A549 (cell line): ENCODE measurements at regions of chr15 and their contacts with region 1.

Region 1: DNA sequence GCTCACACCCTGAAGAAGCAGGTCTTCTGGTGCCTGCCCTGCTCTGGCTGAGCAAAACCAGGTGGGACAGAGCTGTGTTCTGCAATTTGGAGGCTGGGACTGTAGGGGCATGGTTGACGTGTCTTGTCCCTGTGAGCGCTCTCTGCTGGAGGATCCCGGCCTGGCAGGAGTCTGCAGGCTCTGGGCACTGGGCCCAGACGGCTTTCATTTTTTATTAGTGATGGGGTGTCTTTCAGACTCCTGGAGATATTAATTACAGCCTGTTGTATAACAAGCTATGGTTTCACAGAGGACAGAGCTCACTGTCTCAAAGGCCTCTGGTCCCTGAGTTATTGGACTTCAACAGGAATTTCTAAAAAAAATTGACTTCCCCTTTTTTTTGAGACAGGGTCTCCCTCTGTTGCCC is 29.5 kb upstream of the ZNF710 start:
- DNase-seq: peak; percentile 82 to 87
- ATAC-seq: peak; percentile 100
- H3K4me3 ChIP-seq: no peak overlapping the region
- H3K27ac ChIP-seq: no peak overlapping the region
- H3K4me1 ChIP-seq: no peaks in the 10 kb centered on the region
- CTCF ChIP-seq: peak; percentile 69
- EP300 ChIP-seq: no peak
- POLR2A ChIP-seq: no peak
- RAD21 ChIP-seq: peak; percentile 48 to 65

Region 2: GRCh38 chr15:89985111-89985510 is 13.5 kb after region 1 on chr15:
- CTCF ChIA-PET with region 1: interaction called, 14 read pairs
- POLR2A ChIA-PET with region 1: interaction called, 3 read pairs
- DNase-seq: no peak
- ATAC-seq: no peak
- H3K4me3 ChIP-seq: no peak overlapping the region
- H3K27ac ChIP-seq: no peak overlapping the region
- H3K4me1 ChIP-seq: no peaks in the 10 kb centered on the region
- CTCF ChIP-seq: no peak
- EP300 ChIP-seq: no peak
- POLR2A ChIP-seq: no peak
- RAD21 ChIP-seq: no peak

Region 3: DNA sequence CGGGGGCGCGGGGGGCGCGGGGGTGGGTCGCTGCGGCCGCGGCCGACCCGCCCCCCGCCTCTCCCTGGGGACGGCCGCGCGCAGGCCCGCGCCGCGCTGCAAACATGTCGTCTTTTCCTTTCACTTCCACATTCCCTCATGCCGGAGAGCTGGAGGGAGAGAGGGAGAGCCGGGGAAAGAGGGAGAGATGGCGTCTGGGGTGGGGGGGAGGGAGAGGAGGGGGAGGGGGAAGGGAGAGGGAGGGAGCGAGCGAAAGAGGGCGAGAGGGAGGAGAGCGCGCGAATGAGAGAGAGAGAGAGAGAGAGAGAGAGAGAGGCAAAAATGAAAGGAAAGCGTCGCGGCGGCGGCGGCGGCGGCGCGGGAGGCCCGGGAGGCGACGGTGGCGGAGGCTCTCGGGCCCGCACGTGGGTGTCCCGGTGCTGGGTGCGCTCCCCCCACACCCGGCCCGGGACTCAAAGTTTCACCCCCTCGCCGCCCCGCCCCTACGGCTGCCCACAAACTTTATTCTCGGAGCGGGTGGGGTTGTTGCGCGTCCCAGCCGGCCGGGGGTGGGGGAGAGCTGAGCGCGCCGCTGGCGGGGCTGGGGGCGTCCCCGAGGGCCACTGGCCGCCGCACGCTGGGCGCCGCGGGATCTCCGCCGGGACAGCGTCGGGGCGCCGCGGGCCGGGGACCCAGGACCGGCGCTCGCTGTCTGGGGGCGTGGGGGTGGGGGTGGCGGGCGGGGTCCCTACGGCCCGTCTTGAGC is 30.3 kb after region 1 on chr15:
- CTCF ChIA-PET with region 1: interaction called, 11 read pairs
- POLR2A ChIA-PET with region 1: no interaction called
- DNase-seq: peak; percentile 67 to 75
- ATAC-seq: peak; percentile 11 to 37
- H3K4me3 ChIP-seq: peak overlapping the region; percentile 85
- H3K27ac ChIP-seq: peak overlapping the region; percentile 93 to 97
- H3K4me1 ChIP-seq: peaks cover 66% of the 10 kb centered on the region
- CTCF ChIP-seq: no peak
- EP300 ChIP-seq: no peak
- POLR2A ChIP-seq: no peak
- RAD21 ChIP-seq: no peak